AG04450 (cell line): ENCODE measurements at regions of chrX and their contacts with region 1.

Region 1: DNA sequence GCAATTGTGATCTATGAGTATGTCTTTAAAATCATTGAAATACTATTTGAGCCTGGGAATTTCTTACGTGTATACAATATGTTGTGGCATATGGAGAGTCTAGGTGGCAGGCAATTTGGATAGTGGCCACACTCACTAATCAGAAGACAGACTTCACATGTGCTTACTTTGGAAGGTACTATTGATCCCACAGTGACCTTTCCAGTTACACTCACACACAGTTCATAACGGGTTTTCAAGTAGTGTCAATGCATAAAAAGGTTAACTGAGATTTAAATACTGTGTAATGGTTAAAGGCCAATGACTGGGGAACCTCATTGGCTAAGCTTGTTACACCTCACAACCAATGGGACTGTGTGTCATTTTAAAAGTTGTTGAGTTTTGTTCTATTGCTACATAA is 783.2 kb downstream of the RPA4 start:
- DNase-seq: no peak
- H3K4me3 ChIP-seq: no peak overlapping the region
- H3K27ac ChIP-seq: no peak overlapping the region
- H3K27me3 ChIP-seq: no peaks in the 10 kb centered on the region
- CTCF ChIP-seq: no peak

Region 2: GRCh38 chrX:97605271-97605670 is 61.6 kb before region 1 on chrX:
- CTCF ChIA-PET with region 1: no interaction called
- POLR2A ChIA-PET with region 1: no interaction called
- DNase-seq: no peak
- H3K4me3 ChIP-seq: no peak overlapping the region
- H3K27ac ChIP-seq: no peak overlapping the region
- H3K27me3 ChIP-seq: no peaks in the 10 kb centered on the region
- CTCF ChIP-seq: no peak

Region 3: GRCh38 chrX:97685753-97686152 is 18.9 kb after region 1 on chrX:
- CTCF ChIA-PET with region 1: interaction called, 10 read pairs
- POLR2A ChIA-PET with region 1: no interaction called
- DNase-seq: no peak
- H3K4me3 ChIP-seq: no peak overlapping the region
- H3K27ac ChIP-seq: no peak overlapping the region
- H3K27me3 ChIP-seq: no peaks in the 10 kb centered on the region
- CTCF ChIP-seq: peak; percentile 63